AG04450 (cell line): ENCODE measurements at regions of chr9 and their contacts with region 1.

Region 1: GRCh38 chr9:100452894-100453293 is 20.1 kb upstream of the TMEFF1 start:
- DNase-seq: no peak
- H3K4me3 ChIP-seq: no peak overlapping the region
- H3K27ac ChIP-seq: no peak overlapping the region
- H3K27me3 ChIP-seq: no peaks in the 10 kb centered on the region
- CTCF ChIP-seq: no peak

Region 2: GRCh38 chr9:100437860-100438805 is 14.8 kb before region 1 on chr9:
- CTCF ChIA-PET with region 1: interaction called, 19 read pairs
- POLR2A ChIA-PET with region 1: no interaction called
- DNase-seq: peak; percentile 57
- H3K4me3 ChIP-seq: no peak overlapping the region
- H3K27ac ChIP-seq: no peak overlapping the region
- H3K27me3 ChIP-seq: no peaks in the 10 kb centered on the region
- CTCF ChIP-seq: peak; percentile 98

Region 3: DNA sequence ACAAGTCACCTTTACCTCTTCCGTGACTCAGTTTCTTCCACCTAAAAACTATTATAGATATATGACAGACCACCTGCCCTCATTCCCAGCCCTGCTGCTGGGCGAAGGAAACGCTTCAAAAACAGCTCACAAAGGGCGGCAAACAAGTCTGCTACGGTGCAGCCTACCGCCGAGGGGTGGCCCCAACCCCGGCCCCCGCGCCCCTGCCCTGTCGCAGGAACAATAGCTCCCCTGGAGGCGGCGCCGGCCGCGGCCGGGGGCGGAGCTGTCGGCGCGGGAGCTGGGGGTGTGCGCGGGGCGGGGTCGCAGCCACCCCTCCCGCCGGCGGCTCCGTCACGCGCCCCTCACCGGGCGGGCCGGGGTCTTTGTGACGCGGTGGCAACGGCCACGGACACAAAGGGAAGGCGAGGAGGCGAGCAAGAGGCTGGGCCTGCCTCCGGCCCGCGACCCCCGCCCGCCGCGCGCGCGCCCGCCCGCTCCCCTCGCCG is 19.9 kb after region 1 on chr9 and contains the start of gene TMEFF1:
- CTCF ChIA-PET with region 1: no interaction called
- POLR2A ChIA-PET with region 1: no interaction called
- DNase-seq: no peak
- H3K4me3 ChIP-seq: peak within 1 kb of the TSS; percentile 67
- H3K27ac ChIP-seq: no peak within 1 kb of the TSS
- H3K27me3 ChIP-seq: no peaks in the 10 kb centered on the region
- CTCF ChIP-seq: no peak
- polyA plus RNA-seq, gene TMEFF1: 0.32 and 0.45 TPM in 2 replicates